Gastrocnemius medialis (tissue), 4 donors: ENCODE measurements at regions of chr19 and their contacts with region 1.

Region 1: GRCh38 chr19:18203863-18204393 is at the start of gene RAB3A:
- DNase-seq: peak; percentile 100
- ATAC-seq: peak; percentile 93
- H3K4me3 ChIP-seq: peak within 1 kb of the TSS; percentile 74 to 91 (median 80)
- H3K27ac ChIP-seq: peak within 1 kb of the TSS; percentile 98 to 100 (median 100)
- H3K4me1 ChIP-seq: peaks cover 6 to 19% of the 10 kb centered on the region in 2 donors
- H3K27me3 ChIP-seq: no peaks in the 10 kb centered on the region
- CTCF ChIP-seq: no peak
- POLR2A ChIP-seq: no peak
- total RNA-seq, gene RAB3A: 0.51 to 2.3 TPM in 2 of 4 donors, not detected in the others

Region 2: DNA sequence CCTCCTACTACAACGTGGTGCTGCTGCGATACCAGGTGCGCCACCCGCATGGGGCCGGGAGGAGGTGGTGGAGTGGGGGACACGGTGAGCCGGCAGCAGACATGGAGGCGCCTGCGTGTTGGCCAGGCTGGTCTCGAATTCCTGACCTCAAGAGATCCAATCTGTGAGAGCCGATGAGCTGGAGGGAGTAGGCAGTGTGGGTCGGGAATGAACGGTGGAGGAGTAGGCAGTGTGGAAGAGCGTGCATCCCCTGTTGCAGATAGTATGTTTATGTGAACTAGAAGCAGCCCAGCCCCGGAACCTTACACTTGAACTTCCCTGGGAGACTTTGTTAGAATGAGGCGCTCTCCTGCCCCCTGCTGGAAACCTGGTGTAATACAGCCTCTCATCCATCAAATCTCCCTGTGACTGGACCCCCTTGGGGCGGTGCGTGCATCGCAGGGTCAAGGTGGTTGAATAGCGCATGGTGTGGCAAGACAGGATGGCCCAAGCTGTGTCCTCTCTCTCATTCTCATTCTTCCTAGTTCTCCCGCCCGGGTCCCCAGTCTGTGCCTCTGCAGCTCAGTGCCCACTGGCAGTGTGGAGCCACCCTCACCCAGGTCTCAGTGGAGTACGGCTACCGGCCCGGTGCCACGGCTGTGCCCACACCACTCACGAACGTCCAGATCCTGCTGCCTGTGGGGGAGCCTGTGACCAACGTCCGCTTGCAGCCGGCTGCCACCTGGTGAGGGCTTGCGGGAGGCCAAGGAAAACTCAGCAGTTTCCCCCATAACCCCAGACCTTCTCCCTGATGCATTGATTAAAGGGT is 419.5 kb before region 1 on chr19:
- in situ Hi-C with region 1: no loop called
- intact Hi-C with region 1: no loop called
- DNase-seq: no peak
- ATAC-seq: no peak
- H3K4me3 ChIP-seq: no peak overlapping the region
- H3K27ac ChIP-seq: no peak overlapping the region
- H3K4me1 ChIP-seq: no peaks in the 10 kb centered on the region
- H3K27me3 ChIP-seq: peaks cover 6 to 13% (median 8%) of the 10 kb centered on the region in 3 donors
- CTCF ChIP-seq: peak; percentile 24 to 62 (median 59)
- POLR2A ChIP-seq: no peak

Region 3: GRCh38 chr19:18117692-18118378 is 86.1 kb before region 1 on chr19:
- in situ Hi-C with region 1: no loop called
- intact Hi-C with region 1: loop called (anchors 1 kb)
- DNase-seq: peak; percentile 73 to 81
- ATAC-seq: peak; percentile 91
- H3K4me3 ChIP-seq: peak overlapping the region; percentile 59 to 97 (median 75)
- H3K27ac ChIP-seq: peak overlapping the region; percentile 51 to 71 (median 60)
- H3K4me1 ChIP-seq: peaks cover 10 to 12% of the 10 kb centered on the region in 2 donors
- H3K27me3 ChIP-seq: no peaks in the 10 kb centered on the region
- CTCF ChIP-seq: peak in 1 of 5 experiments; percentile 6
- POLR2A ChIP-seq: no peak

Region 4: GRCh38 chr19:18160971-18161635 is 42.8 kb before region 1 on chr19:
- in situ Hi-C with region 1: no loop called
- intact Hi-C with region 1: no loop called
- DNase-seq: peak in 1 of 2 donors; percentile 55
- ATAC-seq: peak; percentile 77 to 85
- H3K4me3 ChIP-seq: peak overlapping the region; percentile 40 to 53 (median 46)
- H3K27ac ChIP-seq: peak overlapping the region; percentile 76 to 88 (median 82)
- H3K4me1 ChIP-seq: peaks cover 17 to 37% of the 10 kb centered on the region in 2 donors
- H3K27me3 ChIP-seq: no peaks in the 10 kb centered on the region
- CTCF ChIP-seq: peak; percentile 61 to 97 (median 76)
- POLR2A ChIP-seq: no peak

Region 5: GRCh38 chr19:18224525-18225354 is 20.8 kb after region 1 on chr19:
- in situ Hi-C with region 1: no loop called
- intact Hi-C with region 1: loop called (anchors 1 kb)
- DNase-seq: peak; percentile 97 to 98
- ATAC-seq: peak; percentile 93
- H3K4me3 ChIP-seq: peak overlapping the region; percentile 52 to 71 (median 62)
- H3K27ac ChIP-seq: peak overlapping the region; percentile 72 to 82 (median 76)
- H3K4me1 ChIP-seq: peaks cover 17 to 24% of the 10 kb centered on the region in 2 donors
- H3K27me3 ChIP-seq: peaks cover 0 to 6% (median 0%) of the 10 kb centered on the region in 3 donors
- CTCF ChIP-seq: no peak
- POLR2A ChIP-seq: no peak

Region 6: DNA sequence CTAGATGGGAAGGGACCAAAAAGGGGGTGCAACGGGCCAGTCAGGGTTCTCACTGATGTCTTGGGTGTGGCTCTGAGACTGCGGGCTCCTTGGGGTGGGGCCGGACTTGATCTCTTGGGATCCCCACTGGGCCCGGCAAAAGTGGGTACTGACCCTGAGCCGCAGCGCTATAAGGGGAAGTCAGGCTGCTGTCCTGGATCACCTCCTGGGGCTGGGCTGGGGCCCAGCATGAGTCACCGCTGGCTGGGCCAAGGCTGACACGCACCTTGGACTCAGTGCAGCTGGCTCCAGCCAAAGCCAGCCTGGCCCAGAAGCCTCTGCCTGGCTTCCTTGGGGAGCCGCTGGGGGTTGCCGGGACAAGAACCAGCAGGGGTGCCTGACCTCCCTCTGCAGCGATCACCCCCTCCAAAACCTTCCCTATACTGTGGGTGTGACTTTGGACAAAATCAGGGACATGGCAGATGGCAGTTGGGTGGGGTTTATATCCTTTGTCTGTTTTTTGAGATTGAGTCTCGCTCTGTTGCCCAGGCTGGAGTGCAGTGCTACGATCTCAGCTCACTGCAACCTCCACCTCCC is 70.9 kb after region 1 on chr19:
- in situ Hi-C with region 1: no loop called
- intact Hi-C with region 1: loop called (anchors 2 kb)
- DNase-seq: peak; percentile 82 to 94
- ATAC-seq: peak; percentile 72 to 77
- H3K4me3 ChIP-seq: peak overlapping the region in 1 of 4 donors; percentile 17
- H3K27ac ChIP-seq: peak overlapping the region; percentile 84 to 99 (median 92)
- H3K4me1 ChIP-seq: peaks cover 40 to 57% of the 10 kb centered on the region in 2 donors
- H3K27me3 ChIP-seq: no peaks in the 10 kb centered on the region
- CTCF ChIP-seq: peak in 3 of 5 experiments; percentile 14 to 32 (median 21)
- POLR2A ChIP-seq: no peak

Region 7: DNA sequence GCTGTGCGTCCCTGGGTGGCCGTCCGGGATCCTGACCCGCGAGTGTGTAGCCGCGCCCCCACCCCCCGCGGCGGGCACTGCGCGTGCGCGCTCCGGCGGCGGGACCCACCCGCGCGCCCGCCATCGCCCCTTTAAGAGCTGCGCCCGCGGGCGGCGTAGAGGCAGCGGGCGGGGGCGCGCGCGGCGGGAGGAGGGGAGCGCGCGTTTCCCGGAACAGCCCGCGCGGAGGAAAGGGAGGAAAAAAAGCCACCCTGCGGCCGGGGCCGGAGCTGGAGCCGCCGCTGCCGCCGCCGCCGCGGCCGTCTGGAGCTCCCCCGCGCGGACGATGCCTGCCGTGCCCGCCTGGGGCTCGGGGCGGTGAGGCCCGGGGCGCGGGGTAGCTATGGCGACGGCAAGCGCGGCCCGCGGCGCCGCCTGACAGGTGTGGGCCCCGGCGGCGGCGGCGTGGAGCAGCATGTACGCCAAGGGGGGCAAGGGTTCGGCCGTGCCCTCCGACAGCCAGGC is 215.3 kb after region 1 on chr19 and contains the start of gene SSBP4:
- in situ Hi-C with region 1: no loop called
- intact Hi-C with region 1: loop called (anchors 10 kb)
- DNase-seq: peak in 1 of 2 donors; percentile 59
- ATAC-seq: peak; percentile 60 to 64
- H3K4me3 ChIP-seq: peak within 1 kb of the TSS; percentile 57 to 69 (median 62)
- H3K27ac ChIP-seq: peak within 1 kb of the TSS; percentile 83 to 92 (median 84)
- H3K4me1 ChIP-seq: peaks cover 18 to 62% of the 10 kb centered on the region in 2 donors
- H3K27me3 ChIP-seq: peaks cover 20 to 26% (median 21%) of the 10 kb centered on the region in 3 donors
- CTCF ChIP-seq: peak in 4 of 5 experiments; percentile 57 to 67 (median 59)
- POLR2A ChIP-seq: peak; percentile 59 to 60
- total RNA-seq, gene SSBP4: 24.7 to 65.2 (median 44.1) TPM